Activated CD4-positive, alpha-beta T cell treated with anti-CD3 and anti-CD28 coated beads, Interleukin-2, amount 10 ng/mL, durations not matched to agents 24 days and 14 days (primary cell): ENCODE measurements at regions of chr4 and their contacts with region 1.

Region 1: DNA sequence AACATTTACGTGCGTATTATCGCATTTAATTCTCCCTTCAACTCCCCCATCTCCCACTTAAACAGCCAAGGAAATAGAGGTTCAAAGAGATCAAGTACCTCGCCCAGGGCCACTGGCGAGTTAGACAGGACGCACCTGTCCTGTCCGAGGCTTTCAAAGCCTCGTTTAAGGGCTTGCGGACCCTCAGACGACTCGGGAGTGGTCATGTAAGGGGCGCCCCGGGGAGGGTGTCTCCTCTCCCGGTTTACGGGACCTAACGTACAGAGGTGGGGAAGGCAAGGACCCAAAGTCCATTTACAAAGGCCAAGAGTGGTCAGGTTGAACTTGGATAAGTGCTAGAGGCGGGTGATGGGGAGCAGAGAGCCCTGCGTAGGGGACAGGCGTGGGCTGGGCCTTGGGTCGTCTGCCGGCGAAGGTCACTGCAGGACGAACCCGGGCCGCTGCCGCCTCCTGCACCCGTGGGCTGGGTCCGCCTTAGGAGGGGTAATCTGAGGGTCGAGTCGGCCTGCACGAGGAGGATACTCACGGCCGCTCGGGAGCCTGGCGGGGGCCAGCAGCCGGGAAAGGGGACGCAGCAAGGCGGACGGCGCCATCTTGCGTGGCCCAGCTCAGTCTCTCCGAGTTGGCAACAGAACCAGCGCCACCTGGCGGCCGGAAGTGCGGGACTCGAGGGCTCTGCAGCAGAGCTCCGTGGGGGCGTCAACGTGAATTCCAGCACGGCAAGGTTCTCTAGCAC is 5.9 kb upstream of the NAA15 start:
- DNase-seq: peak; percentile 99
- H3K4me3 Mint-ChIP-seq: peak overlapping the region; percentile 95
- H3K27ac Mint-ChIP-seq: peak overlapping the region; percentile 98
- H3K4me1 Mint-ChIP-seq: peaks cover 36% of the 10 kb centered on the region
- H3K27me3 Mint-ChIP-seq: no peaks in the 10 kb centered on the region

Region 2: DNA sequence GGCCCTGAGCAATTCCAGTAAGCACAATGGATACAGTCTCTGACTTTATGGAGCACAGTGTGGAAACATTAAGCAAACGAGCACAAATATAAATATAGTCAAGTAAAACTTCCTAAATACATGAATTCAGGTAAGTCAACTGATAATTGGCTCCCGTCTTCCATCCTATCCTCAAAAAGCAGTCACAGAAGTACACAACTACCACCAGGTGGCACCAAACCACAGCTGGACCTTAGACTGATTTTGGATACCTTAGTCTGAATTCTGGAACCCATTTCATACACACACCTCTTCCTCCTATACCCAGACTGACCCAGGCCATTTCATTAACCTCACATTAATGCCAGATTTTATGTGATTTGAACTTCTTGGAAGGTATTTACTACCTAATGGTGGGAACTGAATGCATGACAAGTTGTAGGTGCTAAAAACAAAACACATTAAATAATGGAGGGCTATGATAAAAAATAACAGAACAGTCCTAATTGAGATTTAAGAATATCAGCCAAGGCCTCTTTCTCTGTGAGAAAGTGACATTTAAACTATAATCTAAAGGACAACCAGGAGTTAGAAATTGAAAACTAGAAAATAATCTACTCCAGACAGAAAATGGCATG is 195.9 kb before region 1 on chr4:
- intact Hi-C with region 1: loop called (anchors 1 kb)
- DNase-seq: peak; percentile 90
- H3K4me3 Mint-ChIP-seq: no peak overlapping the region
- H3K27ac Mint-ChIP-seq: no peak overlapping the region
- H3K4me1 Mint-ChIP-seq: peaks cover 4% of the 10 kb centered on the region
- H3K27me3 Mint-ChIP-seq: no peaks in the 10 kb centered on the region

Region 3: GRCh38 chr4:139229534-139230039 is 65.8 kb before region 1 on chr4:
- intact Hi-C with region 1: loop called (anchors 1 kb)
- DNase-seq: peak; percentile 75
- H3K4me3 Mint-ChIP-seq: no peak overlapping the region
- H3K27ac Mint-ChIP-seq: no peak overlapping the region
- H3K4me1 Mint-ChIP-seq: no peaks in the 10 kb centered on the region
- H3K27me3 Mint-ChIP-seq: no peaks in the 10 kb centered on the region

Region 4: GRCh38 chr4:139279760-139280620 is 15.4 kb before region 1 on chr4 and contains the start of gene MGARP:
- intact Hi-C with region 1: loop called (anchors 1 kb)
- DNase-seq: peak; percentile 70
- H3K4me3 Mint-ChIP-seq: peak within 1 kb of the TSS; percentile 79
- H3K27ac Mint-ChIP-seq: no peak within 1 kb of the TSS
- H3K4me1 Mint-ChIP-seq: peaks cover 19% of the 10 kb centered on the region
- H3K27me3 Mint-ChIP-seq: peaks cover 58% of the 10 kb centered on the region
- total RNA-seq, gene MGARP: 0.14 and 0.21 TPM in 2 replicates